Ovary (tissue), 10 donors: ENCODE measurements at regions of chrX and their contacts with region 1.

Region 1: GRCh38 chrX:7925867-7926472 is 1.2 kb downstream of the PNPLA4 start:
- DNase-seq: peak; percentile 13 to 51 (median 38)
- H3K4me3 ChIP-seq: no peak overlapping the region
- H3K27ac ChIP-seq: no peak overlapping the region
- H3K4me1 ChIP-seq: peaks cover 4% of the 10 kb centered on the region
- H3K27me3 ChIP-seq: no peaks in the 10 kb centered on the region
- CTCF ChIP-seq: peak in 1 of 3 donors; percentile 31
- EP300 ChIP-seq: no peak
- POLR2A ChIP-seq: no peak

Region 2: DNA sequence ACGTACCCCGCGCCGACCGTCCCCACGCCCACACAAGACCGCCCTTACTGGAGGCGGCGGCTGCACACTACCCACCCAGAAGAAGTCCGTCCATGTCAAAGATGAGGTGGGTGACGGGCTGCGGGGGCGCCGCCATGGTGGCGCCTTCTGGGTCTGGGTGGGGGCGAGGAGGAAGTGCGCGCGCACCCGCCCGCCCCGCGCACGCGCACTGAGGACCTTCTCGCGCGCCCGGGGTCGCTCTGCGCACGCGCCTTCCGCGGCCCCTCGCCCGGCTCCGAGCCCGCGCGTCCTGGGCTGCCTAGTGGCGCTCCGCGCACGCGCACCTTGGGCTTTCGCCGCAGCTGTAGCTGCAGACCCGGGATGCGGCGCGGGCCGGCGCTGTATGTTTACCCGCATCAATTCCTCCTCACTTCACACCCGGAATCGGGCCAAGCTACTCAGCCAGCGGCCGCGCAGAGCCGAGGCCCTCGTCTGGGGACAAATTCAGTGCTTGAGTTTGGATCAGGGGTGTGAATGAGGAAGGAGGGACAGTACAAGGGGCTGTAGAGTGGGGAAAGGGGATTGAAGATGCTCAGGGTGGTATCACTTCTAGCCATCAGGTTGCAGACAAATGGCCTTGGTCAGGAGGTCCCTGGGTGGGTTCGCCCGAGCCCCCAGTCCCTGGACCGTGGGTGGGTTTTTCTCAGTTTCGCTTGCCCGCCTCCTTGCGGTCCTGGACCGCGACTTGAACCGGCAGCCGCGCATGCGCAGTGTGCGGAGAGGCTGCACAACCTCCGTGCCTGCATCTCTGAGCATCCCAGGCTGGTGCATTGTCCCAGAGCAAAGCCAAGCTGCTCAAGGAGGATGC is 777.8 kb before region 1 on chrX and contains the start of gene PUDP:
- intact Hi-C with region 1: loop called in 1 of 4 experiments (anchors 10 kb)
- DNase-seq: peak; percentile 89 to 95 (median 93)
- H3K4me3 ChIP-seq: peak within 1 kb of the TSS; percentile 76
- H3K27ac ChIP-seq: peak within 1 kb of the TSS; percentile 68 to 88
- H3K4me1 ChIP-seq: no peaks in the 10 kb centered on the region
- H3K27me3 ChIP-seq: no peaks in the 10 kb centered on the region
- CTCF ChIP-seq: peak in 2 of 3 donors; percentile 28 to 36
- EP300 ChIP-seq: no peak
- POLR2A ChIP-seq: peak; percentile 65
- total RNA-seq, gene PUDP: 7.3 to 17.9 (median 14.8) TPM